ENCODE measurements at regions of chr2 and their contacts with region 1.

Region 1: GRCh38 chr2:231601349-231602229 is 8.9 kb downstream of the TEX44 start:
- DNase-seq: peak; percentile 81
- CTCF ChIP-seq: peak; percentile 90

Region 2: GRCh38 chr2:231522799-231523180 is 78.8 kb before region 1 on chr2:
- CTCF ChIA-PET with region 1: interaction called, 40 read pairs
- POLR2A ChIA-PET with region 1: no interaction called
- DNase-seq: no peak
- CTCF ChIP-seq: no peak

Region 3: DNA sequence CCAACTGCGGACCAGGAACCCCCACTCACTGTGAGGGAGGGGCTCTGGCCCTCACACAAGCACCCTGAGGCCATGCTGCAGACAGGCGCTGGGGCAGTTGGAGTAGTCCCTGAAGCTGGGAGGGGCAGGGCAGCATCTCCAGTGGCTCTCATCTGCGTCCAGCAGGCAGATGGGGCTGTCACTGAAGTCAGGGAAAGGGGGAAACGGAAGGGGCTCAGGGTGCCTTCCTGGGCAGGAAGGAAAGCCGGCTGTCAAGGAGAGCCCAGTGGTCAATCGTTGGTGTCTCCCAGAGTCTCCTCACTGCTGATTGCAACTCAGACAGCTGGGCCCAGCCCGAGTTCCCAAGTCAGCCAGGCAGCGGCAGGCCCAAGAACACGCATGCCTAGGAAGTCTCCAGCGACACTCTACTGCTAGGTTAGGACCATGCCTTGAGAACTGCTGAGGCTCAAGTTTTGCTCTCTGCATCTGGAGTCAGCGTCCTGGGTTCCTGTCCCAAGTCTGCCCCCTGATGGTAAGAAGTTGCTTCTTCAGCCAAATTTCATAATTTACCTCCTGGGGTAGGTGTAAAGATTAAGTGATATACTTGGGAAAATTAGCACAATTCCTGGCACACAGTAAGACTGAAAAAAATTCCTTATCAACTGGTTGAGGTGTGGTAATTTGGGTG is 43.9 kb before region 1 on chr2:
- CTCF ChIA-PET with region 1: interaction called, 176 read pairs
- POLR2A ChIA-PET with region 1: no interaction called
- DNase-seq: peak; percentile 91
- CTCF ChIP-seq: peak; percentile 68

Region 4: DNA sequence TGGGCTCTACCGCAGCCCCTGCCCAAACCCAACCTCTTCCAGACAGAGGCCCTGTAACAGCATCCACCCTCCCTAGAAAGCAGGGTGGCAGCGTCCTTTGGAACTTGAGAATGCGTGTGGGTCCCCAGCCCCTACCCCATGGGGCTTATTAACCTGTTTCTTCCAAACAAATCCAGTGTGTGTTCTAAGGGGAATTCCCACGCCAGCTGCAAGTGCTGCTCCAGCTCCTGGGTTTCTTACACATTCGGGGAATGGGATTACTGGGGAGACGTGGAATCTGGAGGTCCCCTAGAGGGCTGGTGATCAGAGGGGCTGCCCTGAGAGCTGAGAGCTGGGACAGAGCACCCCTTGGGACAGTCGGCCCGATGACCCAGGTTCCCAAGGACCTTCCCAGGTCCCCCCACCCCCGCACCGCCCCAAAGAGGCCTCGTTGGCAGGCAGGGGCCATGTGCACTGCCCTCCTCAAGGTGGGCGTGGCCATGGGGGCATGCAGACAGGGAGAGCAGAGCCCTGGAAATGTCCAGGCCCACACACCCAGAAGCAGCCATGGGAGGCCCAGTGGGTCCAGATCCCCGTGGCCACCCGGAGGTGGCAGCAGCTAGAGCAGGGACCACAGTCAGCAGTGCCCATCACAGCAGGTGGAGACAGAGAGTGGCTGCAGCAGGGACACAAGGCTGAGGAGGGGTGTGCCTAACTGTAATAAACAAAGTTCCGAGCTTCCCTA is 27.7 kb before region 1 on chr2:
- CTCF ChIA-PET with region 1: interaction called, 176 read pairs
- POLR2A ChIA-PET with region 1: interaction called, 5 read pairs
- DNase-seq: no peak
- CTCF ChIP-seq: no peak

Region 5: GRCh38 chr2:231590619-231591018 is 11.0 kb before region 1 on chr2:
- CTCF ChIA-PET with region 1: interaction called, 40 read pairs
- POLR2A ChIA-PET with region 1: interaction called, 4 read pairs
- DNase-seq: no peak
- CTCF ChIP-seq: no peak

Region 6: GRCh38 chr2:231674587-231675338 is 73.2 kb after region 1 on chr2:
- CTCF ChIA-PET with region 1: interaction called, 243 read pairs
- POLR2A ChIA-PET with region 1: interaction called, 4 read pairs
- DNase-seq: peak; percentile 72
- CTCF ChIP-seq: peak; percentile 92

Measured in GM10248 (cell line).